Naive thymus-derived CD4-positive, alpha-beta T cell (primary cell): ENCODE measurements at regions of chr12 and their contacts with region 1.

Region 1: DNA sequence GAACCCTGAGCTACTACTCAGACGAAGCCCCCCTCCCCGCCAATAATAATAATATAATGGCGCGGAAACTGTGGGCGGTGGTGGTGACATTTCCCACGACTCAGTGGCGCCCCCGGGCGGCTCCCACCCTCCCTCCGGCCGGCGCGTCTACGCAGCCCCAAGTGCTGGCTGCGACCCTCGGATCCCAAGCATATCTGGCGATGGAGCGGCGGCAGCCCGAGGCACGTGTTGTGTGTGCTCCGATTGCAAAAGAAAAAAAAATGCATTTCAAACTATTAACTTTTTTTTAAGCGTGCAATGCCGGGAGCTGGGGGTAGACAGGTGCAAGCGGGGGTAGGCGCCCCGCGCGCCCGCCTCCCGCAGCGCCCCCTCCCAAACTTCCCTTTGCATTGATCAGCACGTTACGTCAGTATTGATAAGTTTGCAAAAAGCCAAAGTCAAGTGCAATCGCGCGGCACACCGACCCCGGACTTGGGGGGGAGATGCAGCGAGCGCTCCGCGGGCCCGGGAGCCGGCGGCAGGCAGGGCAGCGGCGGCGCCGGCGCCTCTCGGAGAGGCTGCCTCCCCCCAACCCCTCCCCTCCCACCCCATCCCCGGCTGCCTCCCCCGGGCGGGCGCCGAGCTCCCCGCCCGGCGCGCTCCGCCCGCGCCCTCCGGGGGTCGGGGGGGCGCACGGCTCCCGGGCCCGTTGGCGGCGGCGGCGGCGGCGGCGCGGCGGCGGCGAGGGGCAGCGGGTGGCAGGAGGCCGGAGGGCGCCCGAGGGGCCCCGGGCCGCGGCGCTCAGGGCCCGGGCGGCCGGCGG is 113.1 kb upstream of the MYL2 start:
- DNase-seq: peak in 2 of 9 donors; percentile 10 to 18
- ATAC-seq: no peak
- H3K4me3 ChIP-seq: no peak overlapping the region
- H3K4me3 Mint-ChIP-seq: peak overlapping the region in 9 of 10 donors; percentile 58 to 93 (median 68)
- H3K27ac ChIP-seq: no peak overlapping the region
- H3K27ac Mint-ChIP-seq: no peak overlapping the region
- H3K4me1 ChIP-seq: peaks cover 0 to 24% of the 10 kb centered on the region in 2 donors
- H3K4me1 Mint-ChIP-seq: peaks cover 12 to 28% (median 23%) of the 10 kb centered on the region in 7 donors
- H3K27me3 ChIP-seq: peaks cover 10 to 33% of the 10 kb centered on the region in 2 donors
- H3K27me3 Mint-ChIP-seq: peaks cover 50 to 85% (median 61%) of the 10 kb centered on the region in 5 donors

Region 2: DNA sequence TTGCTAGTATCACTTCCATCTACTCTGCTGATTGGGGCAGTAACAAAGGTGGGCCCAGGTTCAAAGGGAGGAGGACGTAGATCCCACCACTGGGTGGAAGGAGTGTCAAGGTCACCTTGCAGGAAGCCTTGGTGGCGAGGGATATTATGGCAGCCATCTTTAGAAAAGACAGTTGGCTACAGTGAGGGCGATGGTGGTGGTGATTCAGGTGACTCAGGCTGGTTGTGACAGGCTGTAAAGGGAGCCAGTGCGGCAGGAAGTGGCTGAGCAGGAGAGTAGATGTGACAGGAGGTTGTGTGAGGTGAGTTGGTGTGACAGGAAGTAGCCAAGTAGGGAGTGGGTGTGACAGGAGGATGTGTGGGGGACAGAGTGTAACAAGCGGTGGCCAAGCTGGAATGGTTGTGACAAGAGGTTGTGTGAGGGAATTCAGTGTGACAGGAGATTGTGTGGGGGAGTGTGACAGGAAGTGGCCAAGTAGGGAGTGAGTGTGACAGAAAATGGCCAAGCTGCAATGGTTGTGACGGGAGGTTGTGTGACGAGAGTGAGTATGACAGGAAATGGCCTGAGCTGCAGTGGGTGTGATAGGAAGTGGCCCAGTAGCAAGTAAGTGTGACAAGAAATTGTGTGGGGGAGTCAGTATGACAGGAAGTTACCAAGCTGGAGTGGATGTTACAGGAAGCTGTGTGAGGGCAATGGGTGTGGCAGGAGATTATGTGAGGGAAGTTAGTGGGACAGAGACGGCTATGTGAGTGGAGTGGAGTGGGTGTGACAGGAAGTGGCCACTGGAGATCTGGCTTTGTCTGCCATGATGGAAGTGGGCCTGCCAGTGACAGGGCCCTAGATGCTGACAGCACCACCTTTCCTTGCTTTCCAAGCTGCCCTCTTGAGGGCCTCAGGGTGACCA is 23.4 kb after region 1 on chr12:
- CTCF ChIA-PET with region 1: no interaction called
- POLR2A ChIA-PET with region 1: no interaction called
- intact Hi-C with region 1: loop called in 1 of 2 experiments (anchors 1 kb)
- DNase-seq: peak in 8 of 9 donors; percentile 38 to 82 (median 70)
- ATAC-seq: peak; percentile 82
- H3K4me3 ChIP-seq: peak overlapping the region; percentile 22
- H3K4me3 Mint-ChIP-seq: peak overlapping the region; percentile 45 to 82 (median 60)
- H3K27ac ChIP-seq: peak overlapping the region; percentile 48
- H3K27ac Mint-ChIP-seq: peak overlapping the region; percentile 90 to 98 (median 97)
- H3K4me1 ChIP-seq: peaks cover 29 to 45% of the 10 kb centered on the region in 2 donors
- H3K4me1 Mint-ChIP-seq: peaks cover 27 to 53% (median 39%) of the 10 kb centered on the region in 7 donors
- H3K27me3 ChIP-seq: no peaks in the 10 kb centered on the region
- H3K27me3 Mint-ChIP-seq: no peaks in the 10 kb centered on the region

Region 3: DNA sequence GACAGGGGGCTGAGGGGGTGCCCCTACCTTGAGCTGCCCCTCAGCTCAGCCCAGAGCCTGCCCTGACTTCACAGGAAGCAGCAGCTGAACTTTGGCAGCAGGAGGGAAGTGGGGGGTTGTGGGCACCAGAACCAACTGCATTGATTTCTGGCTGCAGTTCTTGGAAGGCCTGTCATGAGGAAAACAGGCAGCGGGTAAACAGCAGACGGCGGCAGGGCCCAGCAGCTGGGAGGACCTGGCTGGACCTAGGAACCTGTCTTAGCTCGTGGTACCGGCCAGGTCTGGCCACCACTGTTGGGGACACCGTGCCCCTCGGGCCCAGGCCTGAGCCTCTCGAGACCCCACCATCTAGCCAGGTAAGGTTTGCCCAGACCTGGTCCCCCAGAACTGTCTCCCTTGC is 41.1 kb after region 1 on chr12:
- CTCF ChIA-PET with region 1: no interaction called
- POLR2A ChIA-PET with region 1: interaction called, 3 read pairs
- intact Hi-C with region 1: loop called in 1 of 2 experiments (anchors 5 kb)
- DNase-seq: peak in 4 of 9 donors; percentile 18 to 37 (median 27)
- ATAC-seq: no peak
- H3K4me3 ChIP-seq: no peak overlapping the region
- H3K4me3 Mint-ChIP-seq: peak overlapping the region in 6 of 10 donors; percentile 14 to 69 (median 36)
- H3K27ac ChIP-seq: no peak overlapping the region
- H3K27ac Mint-ChIP-seq: peak overlapping the region in 7 of 9 donors; percentile 16 to 87 (median 55)
- H3K4me1 ChIP-seq: peaks cover 0 to 12% of the 10 kb centered on the region in 2 donors
- H3K4me1 Mint-ChIP-seq: peaks cover 0 to 46% (median 28%) of the 10 kb centered on the region in 7 donors
- H3K27me3 ChIP-seq: no peaks in the 10 kb centered on the region
- H3K27me3 Mint-ChIP-seq: peaks cover 0 to 25% (median 0%) of the 10 kb centered on the region in 5 donors

Region 4: GRCh38 chr12:111093428-111094142 is 60.1 kb after region 1 on chr12:
- CTCF ChIA-PET with region 1: no interaction called
- POLR2A ChIA-PET with region 1: no interaction called
- intact Hi-C with region 1: loop called in 1 of 2 experiments (anchors 10 kb)
- DNase-seq: peak in 6 of 9 donors; percentile 19 to 36 (median 26)
- ATAC-seq: peak; percentile 73
- H3K4me3 ChIP-seq: no peak overlapping the region
- H3K4me3 Mint-ChIP-seq: peak overlapping the region in 9 of 10 donors; percentile 55 to 75 (median 69)
- H3K27ac ChIP-seq: no peak overlapping the region
- H3K27ac Mint-ChIP-seq: peak overlapping the region in 6 of 9 donors; percentile 26 to 90 (median 59)
- H3K4me1 ChIP-seq: peaks cover 0 to 14% of the 10 kb centered on the region in 2 donors
- H3K4me1 Mint-ChIP-seq: peaks cover 5 to 29% (median 18%) of the 10 kb centered on the region in 7 donors
- H3K27me3 ChIP-seq: no peaks in the 10 kb centered on the region
- H3K27me3 Mint-ChIP-seq: peaks cover 0 to 17% (median 0%) of the 10 kb centered on the region in 5 donors